Activated naive CD4-positive, alpha-beta T cell treated with anti-CD3 and anti-CD28 coated beads for 36 hours (primary cell): ENCODE measurements at regions of chr13 and their contacts with region 1.

Region 1: GRCh38 chr13:53250266-53250875 is 221.8 kb downstream of the OLFM4 start:
- DNase-seq: peak; percentile 33
- H3K4me3 Mint-ChIP-seq: no peak overlapping the region
- H3K27ac Mint-ChIP-seq: no peak overlapping the region
- H3K4me1 Mint-ChIP-seq: no peaks in the 10 kb centered on the region
- H3K27me3 Mint-ChIP-seq: peaks cover 3% of the 10 kb centered on the region

Region 2: DNA sequence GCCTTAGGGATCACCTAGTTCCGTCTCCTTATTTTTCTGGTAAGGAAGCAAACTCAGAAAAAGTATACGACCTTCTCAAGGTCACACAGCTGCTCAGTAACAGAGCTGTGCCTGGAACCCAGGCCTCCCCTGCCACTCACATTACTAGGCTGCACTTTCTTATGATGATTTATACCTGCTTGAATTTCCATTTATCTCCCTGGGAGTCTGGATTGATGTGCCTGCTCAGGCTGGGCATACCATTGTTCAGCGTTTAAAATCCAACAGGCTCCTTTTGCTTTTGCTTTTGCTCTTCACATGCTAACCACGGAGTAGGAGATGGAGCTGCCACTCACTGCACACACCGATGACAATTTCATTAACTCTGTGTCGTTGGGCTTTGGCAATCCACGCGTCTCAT is 19.3 kb after region 1 on chr13:
- CTCF ChIA-PET with region 1: no interaction called
- intact Hi-C with region 1: no loop called
- DNase-seq: no peak
- H3K4me3 Mint-ChIP-seq: no peak overlapping the region
- H3K27ac Mint-ChIP-seq: no peak overlapping the region
- H3K4me1 Mint-ChIP-seq: no peaks in the 10 kb centered on the region
- H3K27me3 Mint-ChIP-seq: peaks cover 5% of the 10 kb centered on the region

Region 3: DNA sequence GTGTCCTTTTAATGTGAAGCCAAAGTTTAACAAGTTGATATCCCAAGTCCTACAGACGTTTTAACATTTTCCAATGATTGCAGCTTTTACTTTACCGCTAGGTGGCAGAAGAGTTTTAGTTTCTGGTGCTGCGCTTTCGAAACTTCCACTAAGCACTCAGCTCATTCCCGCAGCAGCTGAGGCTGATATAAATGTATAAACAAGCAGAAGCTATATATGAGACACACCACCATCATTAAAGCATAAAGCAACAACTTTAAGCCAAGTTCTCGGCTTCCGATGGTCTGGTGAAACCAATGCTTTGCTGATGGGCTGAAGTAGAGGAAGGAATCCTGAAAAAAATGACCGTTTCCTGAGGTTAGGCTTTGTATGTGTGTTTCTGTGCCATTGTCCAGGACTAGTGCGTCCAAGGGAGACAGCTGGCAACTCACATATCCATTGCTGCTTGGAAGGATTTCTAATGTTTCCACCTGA is 532.2 kb after region 1 on chr13:
- CTCF ChIA-PET with region 1: interaction called, 4 read pairs
- intact Hi-C with region 1: loop called (anchors 2 kb)
- DNase-seq: peak; percentile 17
- H3K4me3 Mint-ChIP-seq: no peak overlapping the region
- H3K27ac Mint-ChIP-seq: no peak overlapping the region
- H3K4me1 Mint-ChIP-seq: peaks cover 3% of the 10 kb centered on the region
- H3K27me3 Mint-ChIP-seq: peaks cover 3% of the 10 kb centered on the region